ENCODE measurements at regions of chr2 and their contacts with region 1.

Region 1: DNA sequence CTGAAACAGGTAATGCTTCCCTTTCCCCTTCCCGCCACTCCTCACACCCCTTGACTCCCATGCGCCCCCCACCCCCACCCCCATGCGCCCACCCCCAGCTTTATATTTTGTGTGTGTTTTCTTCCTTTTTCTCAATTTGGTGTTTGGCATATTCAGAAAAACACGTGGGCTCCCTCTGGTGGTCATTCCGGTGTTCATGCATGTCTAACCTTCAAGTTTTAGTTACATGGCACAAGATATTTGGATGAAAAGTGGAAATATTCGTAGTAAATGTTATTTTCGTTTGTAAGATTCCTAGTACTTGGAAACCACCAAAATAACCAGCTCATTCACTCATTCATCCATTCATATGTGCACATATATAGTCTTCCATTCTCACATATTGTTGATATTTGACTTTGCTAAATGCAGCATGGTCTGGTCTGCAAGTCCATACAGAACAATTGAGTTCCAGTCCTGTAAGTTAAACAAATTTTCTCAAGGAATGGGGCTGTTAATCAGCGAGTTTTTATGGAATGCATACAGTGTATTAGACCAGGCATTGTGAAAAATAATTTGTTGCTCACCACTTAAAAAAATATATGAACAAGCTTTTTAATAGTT is 143.6 kb upstream of the MAP3K20 start:
- DNase-seq: peak; percentile 55
- ATAC-seq: no peak
- H3K4me3 ChIP-seq: no peak overlapping the region
- H3K4me3 Mint-ChIP-seq: no peak overlapping the region
- H3K27ac ChIP-seq: no peak overlapping the region
- H3K27ac Mint-ChIP-seq: no peak overlapping the region
- H3K4me1 ChIP-seq: no peaks in the 10 kb centered on the region
- H3K4me1 Mint-ChIP-seq: no peaks in the 10 kb centered on the region
- H3K27me3 ChIP-seq: peaks cover 0 to 5% (median 3%) of the 10 kb centered on the region in 4 experiments
- H3K27me3 Mint-ChIP-seq: peaks cover 33% of the 10 kb centered on the region
- CTCF ChIP-seq: peak; percentile 73

Region 2: DNA sequence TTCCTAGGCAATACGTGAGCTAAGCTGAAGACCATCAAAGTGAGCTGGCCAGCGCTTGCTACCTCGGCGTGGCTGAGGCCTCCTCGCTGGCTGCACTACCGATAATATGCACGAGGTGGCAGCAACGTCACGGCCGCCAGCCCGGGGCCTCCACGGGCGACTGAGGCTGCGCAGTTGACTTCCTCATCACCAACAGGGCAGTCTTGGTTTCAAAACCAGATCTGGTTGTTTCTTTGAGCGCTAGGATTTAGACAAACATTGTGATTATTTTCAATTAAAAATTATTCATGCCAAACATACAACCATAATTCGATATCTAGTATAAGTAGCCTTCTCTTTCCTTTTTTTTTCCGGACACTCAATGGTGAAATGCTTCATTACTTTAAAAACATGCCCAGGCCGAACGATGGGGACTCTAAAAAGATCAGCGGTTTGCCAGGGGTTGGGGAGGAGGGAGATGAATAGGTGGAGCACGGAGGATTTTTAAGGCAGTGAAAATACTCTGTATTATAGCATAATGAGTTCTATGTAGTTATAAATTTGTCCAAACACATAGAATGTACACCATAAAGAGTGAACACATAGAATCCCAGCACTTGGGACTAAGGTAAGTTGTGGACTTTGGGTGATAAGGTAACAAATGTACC is 1357.7 kb before region 1 on chr2:
- CTCF ChIA-PET with region 1: no interaction called
- POLR2A ChIA-PET with region 1: no interaction called
- intact Hi-C with region 1: loop called (anchors 5 kb)
- DNase-seq: peak; percentile 87
- ATAC-seq: peak; percentile 100
- H3K4me3 ChIP-seq: peak overlapping the region in 1 of 5 experiments; percentile 5
- H3K4me3 Mint-ChIP-seq: peak overlapping the region; percentile 37
- H3K27ac ChIP-seq: no peak overlapping the region
- H3K27ac Mint-ChIP-seq: no peak overlapping the region
- H3K4me1 ChIP-seq: peaks cover 0 to 4% of the 10 kb centered on the region in 2 donors
- H3K4me1 Mint-ChIP-seq: peaks cover 6% of the 10 kb centered on the region
- H3K27me3 ChIP-seq: no peaks in the 10 kb centered on the region
- H3K27me3 Mint-ChIP-seq: peaks cover 8% of the 10 kb centered on the region
- CTCF ChIP-seq: peak; percentile 97

Region 3: GRCh38 chr2:172806493-172806892 is 125.5 kb before region 1 on chr2:
- CTCF ChIA-PET with region 1: interaction called, 15 read pairs
- POLR2A ChIA-PET with region 1: no interaction called
- intact Hi-C with region 1: no loop called
- DNase-seq: peak; percentile 17
- ATAC-seq: no peak
- H3K4me3 ChIP-seq: no peak overlapping the region
- H3K4me3 Mint-ChIP-seq: no peak overlapping the region
- H3K27ac ChIP-seq: no peak overlapping the region
- H3K27ac Mint-ChIP-seq: no peak overlapping the region
- H3K4me1 ChIP-seq: no peaks in the 10 kb centered on the region
- H3K4me1 Mint-ChIP-seq: no peaks in the 10 kb centered on the region
- H3K27me3 ChIP-seq: peaks cover 0 to 4% (median 1%) of the 10 kb centered on the region in 4 experiments
- H3K27me3 Mint-ChIP-seq: peaks cover 2% of the 10 kb centered on the region
- CTCF ChIP-seq: peak; percentile 84

Region 4: DNA sequence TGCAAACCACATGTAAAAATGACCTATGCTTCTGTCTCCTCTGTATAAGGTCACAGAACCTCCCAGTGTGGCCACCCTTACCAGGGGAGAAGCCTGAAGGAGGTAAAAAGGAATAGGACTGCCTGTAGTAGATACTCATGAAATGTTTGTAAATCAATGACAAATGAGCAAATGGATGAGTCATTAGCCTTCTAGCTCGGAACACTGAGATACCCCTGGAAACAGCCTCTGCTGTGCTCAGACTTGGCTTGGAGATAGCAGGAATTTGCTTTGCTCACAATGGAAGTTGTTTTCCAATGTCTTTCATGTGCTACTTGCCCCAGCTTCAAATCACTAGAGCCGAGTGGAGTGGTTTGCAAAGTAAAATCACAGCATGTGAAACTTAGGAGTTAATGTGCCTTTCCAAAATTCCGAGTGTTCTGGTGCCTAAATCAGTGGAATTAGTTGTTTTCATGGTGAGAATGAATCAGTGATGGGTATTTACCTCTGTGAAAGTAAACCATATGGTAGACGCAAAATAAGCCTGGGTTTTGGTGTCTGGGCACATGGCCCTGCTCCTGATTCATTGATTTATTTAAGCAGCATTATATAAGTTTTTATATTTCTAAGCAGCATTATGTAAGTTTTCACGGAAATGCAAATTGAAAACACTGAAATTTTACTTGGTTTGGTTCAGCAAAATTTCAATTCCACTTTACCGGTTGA is 10.3 kb before region 1 on chr2:
- CTCF ChIA-PET with region 1: interaction called, 14 read pairs
- POLR2A ChIA-PET with region 1: no interaction called
- intact Hi-C with region 1: no loop called
- DNase-seq: no peak
- ATAC-seq: no peak
- H3K4me3 ChIP-seq: no peak overlapping the region
- H3K4me3 Mint-ChIP-seq: no peak overlapping the region
- H3K27ac ChIP-seq: no peak overlapping the region
- H3K27ac Mint-ChIP-seq: no peak overlapping the region
- H3K4me1 ChIP-seq: no peaks in the 10 kb centered on the region
- H3K4me1 Mint-ChIP-seq: peaks cover 2% of the 10 kb centered on the region
- H3K27me3 ChIP-seq: no peaks in the 10 kb centered on the region
- H3K27me3 Mint-ChIP-seq: peaks cover 17% of the 10 kb centered on the region
- CTCF ChIP-seq: no peak